ENCODE measurements at regions of chr1 and their contacts with region 1.

Region 1: DNA sequence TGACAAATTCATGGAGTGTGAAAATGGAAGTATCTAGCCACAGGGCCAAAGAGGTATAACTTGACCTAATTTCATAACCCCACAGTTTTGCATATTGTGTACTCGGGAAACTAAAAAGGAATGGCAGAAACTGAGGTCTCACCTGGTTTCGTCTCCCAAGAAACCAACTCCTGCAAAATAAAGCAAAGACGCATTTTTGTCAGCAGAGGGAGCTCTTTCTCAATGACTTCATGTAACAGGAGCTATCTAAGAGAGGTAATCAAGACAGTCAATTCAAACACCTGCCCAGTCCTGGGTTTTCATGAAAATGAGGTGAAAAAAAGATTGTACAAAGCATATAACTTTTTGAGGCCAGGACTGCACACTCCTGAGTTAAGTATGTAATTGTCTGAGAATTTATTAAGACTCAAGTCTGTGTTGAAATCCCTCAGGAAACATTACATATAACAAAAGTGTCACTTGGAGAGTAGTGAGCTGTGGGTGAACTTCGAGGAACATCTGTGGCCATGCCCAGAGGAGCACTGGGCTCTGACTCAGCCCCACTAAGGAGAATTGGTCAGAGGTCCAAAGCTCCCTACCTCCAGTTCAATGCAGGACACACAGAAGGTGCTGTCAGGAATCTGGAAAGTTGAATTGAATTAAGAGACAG is 17.6 kb downstream of the FCRL4 start:
- DNase-seq: no peak
- ATAC-seq: no peak
- H3K4me3 Mint-ChIP-seq: no peak overlapping the region
- H3K27ac Mint-ChIP-seq: no peak overlapping the region
- H3K4me1 Mint-ChIP-seq: no peaks in the 10 kb centered on the region
- H3K27me3 Mint-ChIP-seq: peaks cover 20% of the 10 kb centered on the region

Region 2: DNA sequence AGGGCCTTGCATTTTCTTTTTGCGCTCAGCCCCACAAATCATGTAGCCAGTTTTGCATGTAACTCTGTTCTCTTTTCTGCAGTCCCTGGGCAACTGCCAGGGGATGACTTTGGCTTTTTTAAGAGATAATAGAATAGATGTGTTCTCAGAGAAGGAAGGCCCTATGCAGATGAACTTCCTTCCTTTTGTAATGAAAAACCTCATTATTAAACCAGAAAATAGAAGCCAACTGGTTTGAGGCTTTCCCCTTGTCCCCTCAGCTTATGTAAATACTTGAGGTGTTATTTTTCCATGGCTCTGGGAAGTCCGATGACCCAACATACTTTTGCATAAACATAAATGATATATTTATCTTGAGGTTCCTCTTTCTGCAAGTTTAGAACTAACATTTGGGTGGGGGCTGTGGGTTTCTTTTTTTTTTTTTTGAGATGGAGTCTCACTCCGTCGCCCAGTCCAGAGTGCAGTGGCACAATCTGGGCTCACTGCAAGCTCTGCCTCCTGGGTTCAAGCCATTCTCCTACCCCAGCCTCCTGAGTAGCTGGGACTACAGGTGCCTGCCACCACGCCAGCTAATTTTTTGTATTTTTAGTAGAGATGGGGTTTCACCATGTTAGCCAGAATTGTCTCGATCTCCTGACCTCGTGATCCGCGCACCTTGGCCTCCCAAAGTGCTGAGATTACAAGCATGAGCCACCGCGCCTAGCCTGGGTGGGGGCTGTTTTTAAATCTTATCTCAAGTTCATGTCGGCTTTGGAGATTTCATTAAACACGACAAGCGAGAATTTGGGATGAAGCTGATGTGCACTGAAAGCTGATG is 13.6 kb before region 1 on chr1:
- CTCF ChIA-PET with region 1: interaction called, 14 read pairs
- DNase-seq: no peak
- ATAC-seq: no peak
- H3K4me3 Mint-ChIP-seq: no peak overlapping the region
- H3K27ac Mint-ChIP-seq: no peak overlapping the region
- H3K4me1 Mint-ChIP-seq: peaks cover 8% of the 10 kb centered on the region
- H3K27me3 Mint-ChIP-seq: peaks cover 47% of the 10 kb centered on the region

Region 3: DNA sequence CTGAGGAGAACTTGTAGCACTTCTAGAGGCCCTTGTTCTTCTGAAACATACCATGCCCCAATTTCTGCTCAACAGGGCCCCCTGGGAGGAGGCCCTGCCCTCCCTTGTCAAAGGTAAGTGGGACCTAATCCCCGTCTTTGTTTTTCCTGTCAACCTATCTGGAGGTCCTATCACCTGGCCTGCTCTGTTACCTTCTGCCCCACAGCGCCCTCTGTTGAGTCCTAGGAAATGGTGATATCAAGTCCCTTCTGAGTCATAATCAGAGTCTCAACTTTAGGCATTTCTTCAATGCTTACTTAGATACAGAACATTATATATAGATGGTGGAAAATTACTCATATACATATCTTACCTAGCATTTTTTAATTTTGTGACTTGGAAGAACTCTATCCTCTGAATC is 45.8 kb after region 1 on chr1:
- CTCF ChIA-PET with region 1: interaction called, 10 read pairs
- DNase-seq: no peak
- ATAC-seq: peak; percentile 42
- H3K4me3 Mint-ChIP-seq: no peak overlapping the region
- H3K27ac Mint-ChIP-seq: no peak overlapping the region
- H3K4me1 Mint-ChIP-seq: no peaks in the 10 kb centered on the region
- H3K27me3 Mint-ChIP-seq: peaks cover 23% of the 10 kb centered on the region

Region 4: GRCh38 chr1:157691285-157691920 is 111.1 kb after region 1 on chr1:
- CTCF ChIA-PET with region 1: interaction called, 16 read pairs
- DNase-seq: no peak
- ATAC-seq: no peak
- H3K4me3 Mint-ChIP-seq: no peak overlapping the region
- H3K27ac Mint-ChIP-seq: no peak overlapping the region
- H3K4me1 Mint-ChIP-seq: no peaks in the 10 kb centered on the region
- H3K27me3 Mint-ChIP-seq: peaks cover 5% of the 10 kb centered on the region

Measured in activated CD8-positive, alpha-beta memory T cell treated with anti-CD3 and anti-CD28 coated beads, Interleukin-2, amount 10 ng/mL, durations not matched to agents 7 days and 5 days (primary cell).